MCF 10A (cell line): ENCODE measurements at regions of chr14 and their contacts with region 1.

Region 1: DNA sequence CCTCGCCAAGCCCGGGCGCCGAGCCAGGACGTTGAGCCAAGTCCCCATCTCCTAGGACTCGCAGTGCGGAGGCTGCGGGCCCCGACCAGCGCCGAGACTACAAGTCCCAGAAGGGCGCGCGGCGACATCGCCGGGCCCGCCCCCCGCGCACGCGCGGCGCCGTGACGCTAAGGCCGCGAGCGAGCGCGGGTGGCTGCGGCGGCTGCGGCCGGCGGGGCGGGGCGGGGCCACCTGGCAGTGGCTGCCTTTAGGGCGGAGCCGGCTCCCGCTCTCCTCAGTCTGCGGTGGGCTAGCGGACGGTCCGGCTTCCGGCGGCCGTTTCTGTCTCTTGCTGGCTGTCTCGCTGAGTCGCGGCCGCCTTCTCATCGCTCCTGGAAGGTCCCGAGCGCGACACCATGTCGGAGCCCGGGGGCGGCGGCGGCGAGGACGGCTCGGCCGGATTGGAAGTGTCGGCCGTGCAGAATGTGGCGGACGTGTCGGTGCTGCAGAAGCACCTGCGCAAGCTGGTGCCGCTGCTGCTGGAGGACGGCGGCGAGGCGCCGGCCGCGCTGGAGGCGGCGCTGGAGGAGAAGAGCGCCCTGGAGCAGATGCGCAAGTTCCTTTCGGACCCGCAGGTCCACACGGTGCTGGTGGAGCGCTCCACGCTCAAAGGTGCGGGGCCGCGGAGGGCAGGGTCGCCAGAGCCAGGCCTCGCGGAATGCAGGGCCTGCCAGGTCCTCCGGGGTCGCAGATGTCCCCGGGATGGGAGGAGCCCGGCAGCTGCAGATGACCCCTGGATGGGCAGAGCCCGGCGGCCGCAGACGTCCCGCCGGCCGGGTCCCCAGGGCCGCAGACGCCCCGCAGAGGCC is at the start of gene DYNC1H1:
- DNase-seq: peak; percentile 86
- H3K4me3 Mint-ChIP-seq: peak within 1 kb of the TSS; percentile 83
- H3K27ac Mint-ChIP-seq: peak within 1 kb of the TSS; percentile 74
- H3K4me1 Mint-ChIP-seq: peaks cover 39% of the 10 kb centered on the region
- H3K27me3 Mint-ChIP-seq: no peaks in the 10 kb centered on the region
- CTCF ChIP-seq: no peak
- total RNA-seq, gene DYNC1H1: 704 and 715 TPM in 2 replicates

Region 2: GRCh38 chr14:101761032-101761880 is 203.3 kb before region 1 on chr14 and contains the start of gene PPP2R5C:
- CTCF ChIA-PET with region 1: no interaction called
- POLR2A ChIA-PET with region 1: interaction called, 12 read pairs
- intact Hi-C with region 1: no loop called
- DNase-seq: peak; percentile 87
- H3K4me3 Mint-ChIP-seq: peak within 1 kb of the TSS; percentile 76
- H3K27ac Mint-ChIP-seq: no peak within 1 kb of the TSS
- H3K4me1 Mint-ChIP-seq: peaks cover 20% of the 10 kb centered on the region
- H3K27me3 Mint-ChIP-seq: no peaks in the 10 kb centered on the region
- CTCF ChIP-seq: no peak
- total RNA-seq, gene PPP2R5C: 118 and 122 TPM in 2 replicates

Region 3: GRCh38 chr14:101809671-101810514 is 154.6 kb before region 1 on chr14:
- CTCF ChIA-PET with region 1: interaction called, 3 read pairs
- POLR2A ChIA-PET with region 1: interaction called, 18 read pairs
- intact Hi-C with region 1: no loop called
- DNase-seq: peak; percentile 92
- H3K4me3 Mint-ChIP-seq: peak overlapping the region; percentile 96
- H3K27ac Mint-ChIP-seq: peak overlapping the region; percentile 98
- H3K4me1 Mint-ChIP-seq: peaks cover 19% of the 10 kb centered on the region
- H3K27me3 Mint-ChIP-seq: no peaks in the 10 kb centered on the region
- CTCF ChIP-seq: no peak

Region 4: DNA sequence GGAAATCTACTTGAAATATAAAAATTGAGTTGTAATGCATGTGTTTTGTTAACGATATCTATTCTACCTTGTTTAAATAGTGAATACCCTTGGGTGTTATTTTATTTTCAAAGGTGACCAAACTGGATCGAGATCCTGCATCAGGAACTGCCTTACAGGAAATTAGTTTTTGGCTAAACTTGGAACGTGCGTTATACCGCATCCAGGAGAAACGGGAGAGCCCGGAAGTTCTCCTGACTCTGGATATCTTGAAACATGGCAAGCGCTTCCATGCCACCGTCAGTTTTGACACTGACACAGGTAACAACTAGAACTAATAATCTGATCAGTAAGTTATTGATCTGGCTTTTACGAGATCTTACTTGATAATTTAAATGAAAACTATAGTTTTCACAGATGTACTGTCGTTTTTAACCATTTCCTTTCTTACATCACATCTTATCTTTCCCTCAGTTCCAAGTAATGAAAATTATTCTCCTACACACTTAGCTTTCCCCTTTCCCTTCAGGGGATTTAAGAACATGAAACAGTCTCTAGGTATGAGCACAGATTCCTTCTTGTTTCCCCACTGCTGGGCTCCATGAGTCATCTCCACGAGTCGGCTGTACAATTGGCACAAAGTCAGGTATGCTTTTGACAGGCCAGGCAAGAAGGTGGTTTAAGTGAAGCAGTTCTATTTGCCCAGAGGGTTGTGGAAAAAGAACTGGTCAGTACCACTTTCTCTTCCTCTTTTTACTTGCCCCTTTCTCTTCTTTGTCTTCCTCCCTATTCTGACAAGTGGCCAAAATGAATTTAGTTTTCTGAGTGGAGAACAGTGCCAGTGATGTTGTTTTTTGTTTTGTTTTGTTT is 16.0 kb after region 1 on chr14:
- CTCF ChIA-PET with region 1: interaction called, 31 read pairs
- POLR2A ChIA-PET with region 1: interaction called, 14 read pairs
- intact Hi-C with region 1: no loop called
- DNase-seq: peak; percentile 99
- H3K4me3 Mint-ChIP-seq: peak overlapping the region; percentile 60
- H3K27ac Mint-ChIP-seq: peak overlapping the region; percentile 88
- H3K4me1 Mint-ChIP-seq: peaks cover 26% of the 10 kb centered on the region
- H3K27me3 Mint-ChIP-seq: no peaks in the 10 kb centered on the region
- CTCF ChIP-seq: no peak

Region 5: GRCh38 chr14:102028421-102029172 is 64.1 kb after region 1 on chr14:
- CTCF ChIA-PET with region 1: interaction called, 20 read pairs
- POLR2A ChIA-PET with region 1: interaction called, 7 read pairs
- intact Hi-C with region 1: loop called (anchors 2 kb)
- DNase-seq: peak; percentile 20
- H3K4me3 Mint-ChIP-seq: peak overlapping the region; percentile 42
- H3K27ac Mint-ChIP-seq: peak overlapping the region; percentile 90
- H3K4me1 Mint-ChIP-seq: peaks cover 29% of the 10 kb centered on the region
- H3K27me3 Mint-ChIP-seq: no peaks in the 10 kb centered on the region
- CTCF ChIP-seq: no peak

Region 6: GRCh38 chr14:102055216-102055918 is 90.8 kb after region 1 on chr14:
- CTCF ChIA-PET with region 1: interaction called, 7 read pairs
- POLR2A ChIA-PET with region 1: no interaction called
- intact Hi-C with region 1: loop called (anchors 5 kb)
- DNase-seq: peak; percentile 64
- H3K4me3 Mint-ChIP-seq: no peak overlapping the region
- H3K27ac Mint-ChIP-seq: peak overlapping the region; percentile 57
- H3K4me1 Mint-ChIP-seq: peaks cover 16% of the 10 kb centered on the region
- H3K27me3 Mint-ChIP-seq: no peaks in the 10 kb centered on the region
- CTCF ChIP-seq: no peak

Region 7: DNA sequence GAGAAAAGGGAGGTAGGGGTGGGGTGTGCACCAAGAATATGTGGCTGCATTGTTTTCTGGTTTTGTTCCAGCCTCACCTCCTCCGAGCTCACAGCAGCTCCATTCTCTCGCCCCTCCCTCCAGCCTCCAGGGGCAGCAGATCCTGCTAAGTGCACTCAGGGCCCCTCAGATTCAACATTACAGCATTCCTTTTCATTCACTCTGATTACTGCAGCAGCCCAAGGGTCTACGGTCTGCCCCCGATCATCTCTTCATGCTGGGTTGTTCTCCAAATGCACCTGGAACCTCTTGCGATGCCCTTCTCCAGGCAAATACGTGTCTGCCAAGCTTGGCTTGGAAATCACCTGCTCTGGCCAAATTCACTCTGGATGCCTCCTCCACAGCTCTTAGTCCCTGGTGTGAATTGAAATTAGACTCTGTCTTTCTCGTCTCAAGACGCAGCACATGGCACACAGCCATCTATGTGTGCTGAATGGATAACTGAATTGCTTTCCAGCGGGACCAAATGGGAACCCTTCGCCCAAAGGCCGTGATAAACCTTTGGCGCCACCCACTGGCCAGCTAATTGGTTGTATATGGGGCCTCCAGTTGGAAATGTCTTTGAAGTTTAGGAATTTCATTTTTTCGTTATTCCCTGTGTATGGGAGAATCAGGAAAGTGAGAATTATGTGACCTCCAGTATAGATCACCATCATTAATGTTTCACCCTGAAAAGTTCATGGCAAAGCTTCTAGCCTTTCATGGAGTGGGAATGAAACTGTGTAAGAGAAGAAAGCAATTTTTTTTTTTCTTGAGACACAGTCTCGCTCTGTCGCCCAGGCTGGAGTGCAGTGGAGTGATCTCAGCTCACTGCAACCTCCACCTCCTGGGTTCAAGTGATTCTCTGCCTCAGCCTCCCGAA is 131.9 kb after region 1 on chr14:
- CTCF ChIA-PET with region 1: interaction called, 39 read pairs
- POLR2A ChIA-PET with region 1: no interaction called
- intact Hi-C with region 1: loop called (anchors 1 kb)
- DNase-seq: peak; percentile 89
- H3K4me3 Mint-ChIP-seq: no peak overlapping the region
- H3K27ac Mint-ChIP-seq: no peak overlapping the region
- H3K4me1 Mint-ChIP-seq: peaks cover 18% of the 10 kb centered on the region
- H3K27me3 Mint-ChIP-seq: no peaks in the 10 kb centered on the region
- CTCF ChIP-seq: peak; percentile 87